Mammary epithelial cell (primary cell): ENCODE measurements at regions of chr10 and their contacts with region 1.

Region 1: DNA sequence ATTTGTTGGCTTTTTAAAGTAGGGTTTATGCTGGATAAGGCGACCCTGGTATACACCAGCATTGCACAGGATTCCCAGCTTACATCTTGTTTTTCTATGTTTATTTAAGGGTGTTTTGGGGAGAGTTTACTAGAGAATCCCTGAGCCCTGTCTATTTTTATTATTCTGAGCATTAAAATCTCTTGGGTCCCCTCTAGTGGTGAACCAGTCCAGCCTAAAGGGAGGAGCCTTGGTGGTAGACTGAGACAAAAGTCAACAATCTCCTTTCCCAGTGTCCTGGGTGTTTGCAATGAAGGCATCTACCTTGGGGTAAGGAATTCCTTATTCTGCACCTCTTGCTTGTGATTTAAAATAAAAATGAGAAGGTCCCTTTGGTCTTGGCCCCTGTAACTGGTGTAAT is 38.2 kb downstream of the ANTXRL start:
- DNase-seq: no peak
- H3K4me3 ChIP-seq: no peak overlapping the region
- H3K27ac ChIP-seq: no peak overlapping the region
- H3K4me1 ChIP-seq: no peaks in the 10 kb centered on the region
- H3K27me3 ChIP-seq: no peaks in the 10 kb centered on the region
- CTCF ChIP-seq: peak in 1 of 2 donors; percentile 51

Region 2: DNA sequence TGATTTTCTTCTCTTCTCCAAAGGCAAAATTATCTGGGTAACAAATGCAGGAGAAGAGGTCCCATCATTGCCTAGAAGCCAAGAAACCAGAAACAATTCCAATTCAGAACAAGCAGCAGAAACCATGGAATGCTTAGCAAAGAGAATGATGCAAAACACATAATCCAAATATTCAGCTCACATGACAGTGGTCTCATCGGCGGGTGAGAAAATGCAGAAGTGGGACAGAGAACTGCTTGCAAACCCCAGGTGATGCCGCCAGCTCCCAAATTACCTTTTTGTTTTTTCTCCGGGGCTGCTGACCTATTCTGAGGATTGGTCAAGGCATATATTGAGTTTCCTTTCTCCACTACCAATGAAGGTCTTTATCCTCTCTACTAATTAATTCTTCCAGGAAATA is 1224.6 kb before region 1 on chr10:
- CTCF ChIA-PET with region 1: interaction called, 10 read pairs
- dilution Hi-C with region 1: no loop called
- in situ Hi-C with region 1: no loop called
- intact Hi-C with region 1: no loop called
- DNase-seq: no peak
- H3K4me3 ChIP-seq: no peak overlapping the region
- H3K27ac ChIP-seq: no peak overlapping the region
- H3K4me1 ChIP-seq: no peaks in the 10 kb centered on the region
- H3K27me3 ChIP-seq: peaks cover 3% of the 10 kb centered on the region
- CTCF ChIP-seq: no peak

Region 3: DNA sequence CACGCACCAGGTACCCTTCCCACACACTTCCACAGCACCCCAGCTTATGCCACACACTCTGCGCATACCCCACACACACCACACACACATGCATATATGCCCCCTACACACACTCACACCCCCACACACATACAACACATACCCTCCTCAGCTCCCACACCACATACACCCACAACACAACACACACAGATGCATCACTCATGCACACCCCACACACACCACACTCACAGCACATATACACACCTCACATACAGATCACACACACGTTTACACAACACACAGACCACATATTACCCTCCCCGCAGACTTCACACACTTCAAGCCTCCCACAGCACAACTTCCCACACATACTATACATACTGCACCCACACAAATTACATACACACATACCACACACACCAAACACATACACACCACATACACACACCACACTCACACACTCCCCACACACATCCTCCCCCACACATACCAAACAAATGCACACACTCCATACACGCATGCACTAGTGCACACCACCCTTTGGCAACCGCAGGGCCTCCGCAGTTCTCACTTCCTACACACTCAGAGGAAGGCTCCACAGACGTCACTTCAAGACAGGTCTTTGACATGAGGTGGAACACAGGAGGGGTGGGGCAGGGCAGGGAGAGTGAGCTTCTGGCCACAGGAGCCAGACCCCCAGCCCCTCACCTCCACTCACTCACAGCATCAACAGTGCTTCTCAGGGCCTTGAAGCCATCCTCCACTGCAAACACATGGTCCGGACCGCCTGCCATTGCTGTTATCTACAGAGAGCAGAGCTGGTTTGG is 56.7 kb before region 1 on chr10:
- CTCF ChIA-PET with region 1: no interaction called
- dilution Hi-C with region 1: loop called (anchors 10 kb)
- in situ Hi-C with region 1: no loop called
- intact Hi-C with region 1: no loop called
- DNase-seq: no peak
- H3K4me3 ChIP-seq: no peak overlapping the region
- H3K27ac ChIP-seq: no peak overlapping the region
- H3K4me1 ChIP-seq: no peaks in the 10 kb centered on the region
- H3K27me3 ChIP-seq: no peaks in the 10 kb centered on the region
- CTCF ChIP-seq: no peak